K562 (cell line): ENCODE measurements at regions of chr1 and their contacts with region 1.

Region 1: DNA sequence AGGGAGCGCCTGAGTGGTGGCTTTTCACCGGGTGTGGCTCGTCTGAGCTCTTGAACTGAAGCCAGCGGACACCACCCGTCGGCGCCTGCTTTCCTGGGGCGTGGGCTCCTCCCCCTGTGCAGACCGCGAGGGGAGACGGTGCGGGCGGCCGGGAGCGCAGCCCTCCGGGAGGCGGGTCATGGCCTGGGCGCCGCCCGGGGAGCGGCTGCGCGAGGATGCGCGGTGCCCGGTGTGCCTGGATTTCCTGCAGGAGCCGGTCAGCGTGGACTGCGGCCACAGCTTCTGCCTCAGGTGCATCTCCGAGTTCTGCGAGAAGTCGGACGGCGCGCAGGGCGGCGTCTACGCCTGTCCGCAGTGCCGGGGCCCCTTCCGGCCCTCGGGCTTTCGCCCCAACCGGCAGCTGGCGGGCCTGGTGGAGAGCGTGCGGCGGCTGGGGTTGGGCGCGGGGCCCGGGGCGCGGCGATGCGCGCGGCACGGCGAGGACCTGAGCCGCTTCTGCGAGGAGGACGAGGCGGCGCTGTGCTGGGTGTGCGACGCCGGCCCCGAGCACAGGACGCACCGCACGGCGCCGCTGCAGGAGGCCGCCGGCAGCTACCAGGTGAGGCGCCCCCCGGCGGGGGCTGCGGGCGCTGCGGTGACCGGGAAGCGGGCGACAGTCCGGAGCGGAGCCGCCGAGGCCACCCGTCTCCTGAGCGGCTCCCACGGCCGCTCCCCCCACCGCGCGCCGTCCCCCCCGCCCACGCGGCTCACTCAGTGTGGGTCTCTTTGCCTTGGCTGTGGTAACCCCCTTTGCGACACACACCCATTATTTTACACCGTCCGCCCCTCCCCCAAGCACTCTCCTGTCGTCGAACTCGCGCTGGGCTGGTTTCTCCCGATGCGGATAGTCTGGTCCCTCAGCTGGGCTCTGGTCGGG is at the start of gene TRIM58:
- DNase-seq: peak; percentile 92 to 96 (median 94)
- ATAC-seq: peak; percentile 88
- H3K4me3 ChIP-seq: peak within 1 kb of the TSS; percentile 84
- H3K27ac ChIP-seq: peak within 1 kb of the TSS; percentile 88
- H3K4me1 ChIP-seq: peaks cover 34 to 37% of the 10 kb centered on the region in 2 experiments
- H3K27me3 ChIP-seq: no peaks in the 10 kb centered on the region
- CTCF ChIP-seq: peak; percentile 56 to 98 (median 83)
- EP300 ChIP-seq: peak; percentile 57
- POLR2A ChIP-seq: peak; percentile 86
- RAD21 ChIP-seq: peak; percentile 54 to 55
- polyA plus RNA-seq, gene TRIM58: 3.8 to 5.8 TPM

Region 2: GRCh38 chr1:247923941-247924340 is 66.6 kb after region 1 on chr1:
- CTCF ChIA-PET with region 1: no interaction called
- POLR2A ChIA-PET with region 1: no interaction called
- in situ Hi-C with region 1: no loop called
- intact Hi-C with region 1: no loop called
- DNase-seq: no peak
- ATAC-seq: peak; percentile 57; the same call in 2 of the 3 replicates
- H3K4me3 ChIP-seq: no peak overlapping the region
- H3K27ac ChIP-seq: no peak overlapping the region
- H3K4me1 ChIP-seq: no peaks in the 10 kb centered on the region
- H3K27me3 ChIP-seq: no peaks in the 10 kb centered on the region
- CTCF ChIP-seq: no peak
- EP300 ChIP-seq: no peak
- POLR2A ChIP-seq: no peak
- RAD21 ChIP-seq: no peak

Region 3: GRCh38 chr1:248825909-248826760 is 968.8 kb after region 1 on chr1 and contains the start of gene SH3BP5L:
- CTCF ChIA-PET with region 1: interaction called, 3 read pairs
- POLR2A ChIA-PET with region 1: interaction called, 3 read pairs
- in situ Hi-C with region 1: no loop called
- intact Hi-C with region 1: loop called (anchors 5 kb)
- DNase-seq: peak; percentile 88 to 98 (median 92)
- ATAC-seq: peak; percentile 90
- H3K4me3 ChIP-seq: peak within 1 kb of the TSS; percentile 90
- H3K27ac ChIP-seq: peak within 1 kb of the TSS; percentile 99
- H3K4me1 ChIP-seq: peaks cover 29 to 50% of the 10 kb centered on the region in 2 experiments
- H3K27me3 ChIP-seq: no peaks in the 10 kb centered on the region
- CTCF ChIP-seq: peak; percentile 75 to 92 (median 79)
- EP300 ChIP-seq: peak; percentile 9
- POLR2A ChIP-seq: peak; percentile 93
- RAD21 ChIP-seq: peak; percentile 66 to 68
- polyA plus RNA-seq, gene SH3BP5L: 1.9 to 2.7 TPM